ENCODE measurements at regions of chr11 and their contacts with region 1.

Region 1: GRCh38 chr11:120500414-120501071 is 11.0 kb upstream of the GRIK4 start:
- DNase-seq: no peak
- ATAC-seq: peak; percentile 61
- H3K4me3 ChIP-seq: no peak overlapping the region
- H3K27ac ChIP-seq: peak overlapping the region; percentile 24; the same call in 1 of the 2 replicates
- H3K4me1 ChIP-seq: peaks cover 20% of the 10 kb centered on the region
- H3K27me3 ChIP-seq: no peaks in the 10 kb centered on the region; a peak in 1 of 4 replicates
- CTCF ChIP-seq: no peak
- EP300 ChIP-seq: no peak
- POLR2A ChIP-seq: no peak
- RAD21 ChIP-seq: no peak

Region 2: DNA sequence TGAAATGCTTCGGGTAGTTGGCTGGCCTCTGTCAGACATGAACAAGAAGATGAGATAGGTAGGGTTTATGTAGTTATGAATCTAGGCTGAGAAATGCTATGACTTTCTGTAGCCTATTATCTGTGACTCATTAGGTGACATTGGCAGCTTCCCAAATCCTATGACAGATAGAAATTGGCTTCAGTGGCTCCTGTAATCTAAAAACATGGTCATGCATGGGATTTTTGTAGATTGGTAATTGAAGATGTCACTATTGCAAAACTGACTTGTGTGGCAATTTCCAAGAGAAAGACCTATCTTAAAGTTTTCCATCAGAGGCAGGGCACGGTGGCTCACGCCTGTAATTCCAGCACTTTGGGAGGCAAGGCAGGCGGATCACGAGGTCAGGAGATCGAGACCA is 18.4 kb before region 1 on chr11:
- CTCF ChIA-PET with region 1: interaction called, 11 read pairs
- POLR2A ChIA-PET with region 1: no interaction called
- RAD21 ChIA-PET with region 1: no interaction called
- SMC1A ChIA-PET with region 1: interaction called, 3 read pairs
- in situ Hi-C with region 1: no loop called
- intact Hi-C with region 1: no loop called
- DNase-seq: no peak
- ATAC-seq: no peak
- H3K4me3 ChIP-seq: no peak overlapping the region
- H3K27ac ChIP-seq: no peak overlapping the region
- H3K4me1 ChIP-seq: no peaks in the 10 kb centered on the region
- H3K27me3 ChIP-seq: no peaks in the 10 kb centered on the region
- CTCF ChIP-seq: no peak
- EP300 ChIP-seq: no peak
- POLR2A ChIP-seq: no peak
- RAD21 ChIP-seq: no peak

Region 3: DNA sequence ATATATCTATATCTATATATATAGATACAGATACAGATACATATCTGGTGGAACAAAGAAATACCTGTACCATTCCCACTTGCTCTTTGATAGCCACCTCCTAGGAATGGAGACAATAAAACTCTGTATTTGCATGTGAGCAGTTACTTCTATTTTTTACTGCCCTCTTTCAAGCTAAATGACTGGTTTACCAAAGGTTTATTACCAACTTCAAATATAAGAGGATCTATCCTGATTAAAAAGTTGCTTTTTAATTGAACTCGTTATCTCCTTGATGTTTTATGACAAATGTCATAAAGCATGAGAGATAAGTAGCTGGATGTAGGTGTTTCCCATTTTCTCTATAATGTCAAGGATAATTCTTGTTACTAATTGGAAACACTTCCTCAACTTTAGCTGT is 10.7 kb before region 1 on chr11:
- CTCF ChIA-PET with region 1: interaction called, 11 read pairs
- POLR2A ChIA-PET with region 1: interaction called, 3 read pairs
- RAD21 ChIA-PET with region 1: interaction called, 5 read pairs
- SMC1A ChIA-PET with region 1: interaction called, 14 read pairs
- in situ Hi-C with region 1: no loop called
- intact Hi-C with region 1: no loop called
- DNase-seq: no peak
- ATAC-seq: no peak
- H3K4me3 ChIP-seq: no peak overlapping the region
- H3K27ac ChIP-seq: no peak overlapping the region
- H3K4me1 ChIP-seq: no peaks in the 10 kb centered on the region
- H3K27me3 ChIP-seq: no peaks in the 10 kb centered on the region
- CTCF ChIP-seq: no peak
- EP300 ChIP-seq: no peak
- POLR2A ChIP-seq: no peak
- RAD21 ChIP-seq: no peak

Region 4: GRCh38 chr11:120547811-120548681 is 47.5 kb after region 1 on chr11:
- CTCF ChIA-PET with region 1: no interaction called
- POLR2A ChIA-PET with region 1: no interaction called
- RAD21 ChIA-PET with region 1: no interaction called
- SMC1A ChIA-PET with region 1: no interaction called
- in situ Hi-C with region 1: no loop called
- intact Hi-C with region 1: no loop called
- DNase-seq: no peak
- ATAC-seq: peak; percentile 28; the same call in 2 of the 3 replicates
- H3K4me3 ChIP-seq: no peak overlapping the region
- H3K27ac ChIP-seq: no peak overlapping the region
- H3K4me1 ChIP-seq: no peaks in the 10 kb centered on the region; the same call in 1 of the 2 replicates
- H3K27me3 ChIP-seq: no peaks in the 10 kb centered on the region
- CTCF ChIP-seq: no peak
- EP300 ChIP-seq: no peak
- POLR2A ChIP-seq: no peak
- RAD21 ChIP-seq: no peak

Measured in GM12878 (cell line).